CD4-positive, alpha-beta T cell (primary cell): ENCODE measurements at regions of chr9 and their contacts with region 1.

Region 1: DNA sequence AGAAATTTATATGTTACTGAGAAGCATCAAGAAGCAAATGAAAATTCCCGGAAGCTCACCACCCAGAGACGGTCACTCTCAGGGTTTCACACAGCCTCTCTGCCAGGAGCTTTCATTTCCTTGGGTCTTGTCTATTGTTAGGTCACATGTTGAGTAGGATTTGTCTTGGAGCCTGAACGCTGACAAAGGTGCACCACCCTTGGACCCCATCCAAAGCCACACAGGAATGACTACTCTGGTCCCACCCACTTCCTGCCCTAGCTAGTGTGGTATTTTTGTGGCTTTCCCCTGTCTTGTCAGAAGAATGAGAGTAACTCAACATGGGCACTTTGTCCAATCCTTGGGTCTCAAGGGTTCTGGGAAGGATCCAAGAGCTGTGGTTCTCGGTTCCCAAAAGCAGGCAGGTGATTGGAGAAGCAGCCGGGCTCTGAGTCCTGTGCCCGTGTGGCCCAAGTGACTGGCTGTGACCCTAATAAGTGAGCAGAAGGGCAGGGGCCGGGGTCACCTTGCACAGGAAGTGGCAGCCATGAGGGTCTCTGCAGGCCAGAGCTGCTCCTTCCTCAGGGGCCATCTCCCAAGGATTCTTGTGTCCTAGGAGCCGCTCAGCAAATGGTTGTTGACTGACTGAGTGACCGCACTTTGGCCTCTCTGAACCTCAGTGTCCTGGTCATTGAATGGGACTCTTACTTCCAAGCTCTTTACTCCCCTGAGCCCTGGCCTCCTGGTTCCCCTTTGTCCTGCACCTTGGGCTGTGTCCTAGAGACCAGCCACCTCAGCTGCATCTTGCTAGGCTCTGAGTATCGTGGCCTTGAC is 6.9 kb downstream of the FGD3 start:
- DNase-seq: peak; percentile 61 to 95 (median 80)
- ATAC-seq: peak; percentile 90
- H3K4me3 ChIP-seq: peak overlapping the region; percentile 55
- H3K4me3 Mint-ChIP-seq: peak overlapping the region; percentile 92
- H3K27ac ChIP-seq: peak overlapping the region; percentile 67 to 90
- H3K27ac Mint-ChIP-seq: peak overlapping the region; percentile 98
- H3K4me1 ChIP-seq: peaks cover 91% of the 10 kb centered on the region
- H3K4me1 Mint-ChIP-seq: peaks cover 89% of the 10 kb centered on the region
- H3K27me3 ChIP-seq: no peaks in the 10 kb centered on the region
- H3K27me3 Mint-ChIP-seq: no peaks in the 10 kb centered on the region
- CTCF ChIP-seq: no peak

Region 2: GRCh38 chr9:92850884-92851283 is 103.4 kb before region 1 on chr9:
- CTCF ChIA-PET with region 1: no interaction called
- POLR2A ChIA-PET with region 1: interaction called, 10 read pairs
- intact Hi-C with region 1: no loop called
- DNase-seq: peak in 4 of 14 experiments; percentile 6 to 50 (median 38)
- ATAC-seq: peak; percentile 64
- H3K4me3 ChIP-seq: no peak overlapping the region
- H3K4me3 Mint-ChIP-seq: no peak overlapping the region
- H3K27ac ChIP-seq: no peak overlapping the region
- H3K27ac Mint-ChIP-seq: peak overlapping the region; percentile 19
- H3K4me1 ChIP-seq: peaks cover 3% of the 10 kb centered on the region
- H3K4me1 Mint-ChIP-seq: peaks cover 17% of the 10 kb centered on the region
- H3K27me3 ChIP-seq: no peaks in the 10 kb centered on the region
- H3K27me3 Mint-ChIP-seq: no peaks in the 10 kb centered on the region
- CTCF ChIP-seq: peak; percentile 57

Region 3: DNA sequence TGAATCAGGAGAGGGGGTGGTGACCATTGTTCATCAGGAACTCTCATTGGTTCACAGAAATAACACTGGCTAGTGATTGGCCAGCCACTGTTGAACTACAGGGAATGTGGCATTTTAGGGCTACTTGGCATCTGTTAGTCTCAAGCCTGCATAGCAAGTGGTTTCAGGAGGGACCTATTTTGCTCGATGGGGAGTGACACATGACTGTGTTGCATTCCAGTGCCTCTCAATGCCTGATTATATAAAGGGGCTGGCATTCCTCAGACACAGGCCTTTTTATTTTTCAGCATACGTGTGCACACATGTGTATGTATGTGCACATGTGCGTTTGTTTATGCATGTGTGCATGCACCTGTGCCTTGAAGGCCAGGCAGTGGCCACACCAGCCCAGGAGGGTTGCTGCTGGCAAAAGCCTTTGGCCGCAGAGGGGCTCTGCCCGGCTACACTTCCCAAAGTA is 16.2 kb after region 1 on chr9:
- CTCF ChIA-PET with region 1: interaction called, 10 read pairs
- POLR2A ChIA-PET with region 1: interaction called, 161 read pairs
- intact Hi-C with region 1: loop called in 1 of 2 experiments (anchors 2 kb)
- DNase-seq: peak in 3 of 14 experiments; percentile 24 to 35 (median 33)
- ATAC-seq: no peak
- H3K4me3 ChIP-seq: peak overlapping the region; percentile 69
- H3K4me3 Mint-ChIP-seq: peak overlapping the region; percentile 94
- H3K27ac ChIP-seq: peak overlapping the region; percentile 47 to 95
- H3K27ac Mint-ChIP-seq: peak overlapping the region; percentile 99
- H3K4me1 ChIP-seq: peaks cover 92% of the 10 kb centered on the region
- H3K4me1 Mint-ChIP-seq: peaks cover 89% of the 10 kb centered on the region
- H3K27me3 ChIP-seq: no peaks in the 10 kb centered on the region
- H3K27me3 Mint-ChIP-seq: no peaks in the 10 kb centered on the region
- CTCF ChIP-seq: no peak

Region 4: DNA sequence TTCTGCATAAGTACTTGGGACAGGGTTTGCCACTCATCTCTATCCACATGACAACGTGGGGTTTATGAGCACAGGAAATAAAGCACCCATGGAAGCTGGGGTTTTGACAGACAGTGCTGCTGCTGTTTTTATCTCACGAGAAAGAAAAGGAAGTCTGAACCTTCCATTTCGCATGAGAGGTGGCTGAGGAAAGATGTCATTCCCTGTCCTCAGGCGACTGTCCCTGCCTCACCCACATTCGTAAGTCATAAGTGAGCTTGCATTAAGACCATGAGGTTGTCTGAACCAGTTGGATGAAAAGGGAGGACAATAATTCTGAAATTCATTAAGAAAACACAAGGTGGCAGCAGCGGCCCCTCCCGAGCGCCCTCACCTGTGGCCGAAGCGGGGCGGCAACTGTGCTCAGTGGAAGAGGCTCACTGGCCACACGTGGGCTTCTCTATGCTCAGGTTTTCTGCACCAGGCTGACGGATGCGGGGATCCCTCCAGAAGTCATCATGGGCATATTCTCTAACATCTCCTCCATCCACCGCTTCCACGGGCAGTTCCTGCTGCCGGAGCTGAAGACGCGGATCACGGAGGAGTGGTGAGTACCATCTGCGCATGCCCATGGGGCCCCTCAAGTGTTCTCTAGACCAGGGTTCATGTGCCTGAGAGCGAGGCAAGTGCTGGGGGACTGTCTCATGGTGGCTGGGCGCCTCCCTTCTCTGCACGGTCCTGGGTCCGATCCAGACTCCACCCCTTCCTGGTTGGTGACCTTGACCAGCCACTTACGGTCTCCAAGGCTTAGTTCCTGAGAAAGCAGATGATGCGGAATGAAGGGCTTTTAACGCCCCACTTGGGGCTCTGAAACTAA is 49.5 kb after region 1 on chr9:
- CTCF ChIA-PET with region 1: interaction called, 18 read pairs
- POLR2A ChIA-PET with region 1: interaction called, 16 read pairs
- intact Hi-C with region 1: loop called in 1 of 2 experiments (anchors 5 kb)
- DNase-seq: peak; percentile 47 to 85 (median 56)
- ATAC-seq: peak; percentile 77
- H3K4me3 ChIP-seq: no peak overlapping the region
- H3K4me3 Mint-ChIP-seq: peak overlapping the region; percentile 71
- H3K27ac ChIP-seq: peak overlapping the region; percentile 7 to 63
- H3K27ac Mint-ChIP-seq: peak overlapping the region; percentile 88
- H3K4me1 ChIP-seq: peaks cover 48% of the 10 kb centered on the region
- H3K4me1 Mint-ChIP-seq: peaks cover 65% of the 10 kb centered on the region
- H3K27me3 ChIP-seq: no peaks in the 10 kb centered on the region
- H3K27me3 Mint-ChIP-seq: no peaks in the 10 kb centered on the region
- CTCF ChIP-seq: peak; percentile 79

Region 5: DNA sequence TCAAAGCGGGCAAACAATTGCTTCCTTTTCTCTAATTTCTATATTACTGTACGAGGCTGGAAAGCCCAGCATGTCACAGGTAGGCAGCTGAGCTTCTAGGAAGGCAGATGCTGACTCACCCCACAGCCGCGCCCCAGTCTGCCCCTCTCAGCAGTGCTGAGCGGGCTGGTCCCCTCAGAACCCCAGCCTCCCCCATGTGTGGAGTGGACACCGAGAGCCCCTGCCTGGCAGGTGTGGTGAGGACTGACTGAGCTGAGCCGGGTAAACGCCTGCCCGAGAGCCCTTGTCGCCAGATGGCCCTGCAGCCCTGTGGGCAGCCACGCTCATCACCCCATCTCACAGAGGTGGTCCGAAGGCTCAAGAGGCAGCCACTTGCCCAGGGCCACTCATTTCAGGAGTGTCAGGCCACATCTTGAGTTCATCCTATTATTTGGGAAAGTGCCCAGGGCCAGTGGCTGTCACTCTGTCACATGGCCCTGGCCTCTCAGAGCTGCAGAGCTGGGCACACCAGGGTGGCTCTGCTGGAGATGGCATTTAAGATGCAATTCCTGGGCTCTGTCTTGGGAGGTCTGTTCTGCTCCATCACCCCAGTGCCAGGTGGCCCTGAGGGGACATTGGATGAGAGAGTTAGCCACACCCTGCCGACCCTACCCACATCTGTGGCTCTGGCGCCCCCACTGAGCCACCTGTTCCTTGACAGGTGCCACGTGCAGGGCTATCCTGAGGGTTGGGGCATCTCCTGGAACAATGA is 154.2 kb after region 1 on chr9:
- CTCF ChIA-PET with region 1: interaction called, 7 read pairs
- POLR2A ChIA-PET with region 1: no interaction called
- intact Hi-C with region 1: loop called in 1 of 2 experiments (anchors 2 kb)
- DNase-seq: peak in 2 of 14 experiments; percentile 39 to 48
- ATAC-seq: no peak
- H3K4me3 ChIP-seq: no peak overlapping the region
- H3K4me3 Mint-ChIP-seq: no peak overlapping the region
- H3K27ac ChIP-seq: no peak overlapping the region
- H3K27ac Mint-ChIP-seq: peak overlapping the region; percentile 52
- H3K4me1 ChIP-seq: peaks cover 65% of the 10 kb centered on the region
- H3K4me1 Mint-ChIP-seq: peaks cover 58% of the 10 kb centered on the region
- H3K27me3 ChIP-seq: no peaks in the 10 kb centered on the region
- H3K27me3 Mint-ChIP-seq: no peaks in the 10 kb centered on the region
- CTCF ChIP-seq: no peak